GM12878 (cell line): ENCODE measurements at regions of chr15 and their contacts with region 1.

Region 1: GRCh38 chr15:100934726-100935125 is 15.6 kb downstream of the LRRK1 start:
- DNase-seq: no peak
- ATAC-seq: peak; percentile 75
- H3K4me3 ChIP-seq: no peak overlapping the region
- H3K27ac ChIP-seq: peak overlapping the region; percentile 54
- H3K4me1 ChIP-seq: peaks cover 57% of the 10 kb centered on the region
- H3K27me3 ChIP-seq: no peaks in the 10 kb centered on the region
- CTCF ChIP-seq: peak in 2 of 3 experiments; percentile 28 to 36; a peak in 4 of 6 replicates
- EP300 ChIP-seq: no peak
- POLR2A ChIP-seq: no peak
- RAD21 ChIP-seq: peak; percentile 41; the same call in 1 of the 2 replicates

Region 2: DNA sequence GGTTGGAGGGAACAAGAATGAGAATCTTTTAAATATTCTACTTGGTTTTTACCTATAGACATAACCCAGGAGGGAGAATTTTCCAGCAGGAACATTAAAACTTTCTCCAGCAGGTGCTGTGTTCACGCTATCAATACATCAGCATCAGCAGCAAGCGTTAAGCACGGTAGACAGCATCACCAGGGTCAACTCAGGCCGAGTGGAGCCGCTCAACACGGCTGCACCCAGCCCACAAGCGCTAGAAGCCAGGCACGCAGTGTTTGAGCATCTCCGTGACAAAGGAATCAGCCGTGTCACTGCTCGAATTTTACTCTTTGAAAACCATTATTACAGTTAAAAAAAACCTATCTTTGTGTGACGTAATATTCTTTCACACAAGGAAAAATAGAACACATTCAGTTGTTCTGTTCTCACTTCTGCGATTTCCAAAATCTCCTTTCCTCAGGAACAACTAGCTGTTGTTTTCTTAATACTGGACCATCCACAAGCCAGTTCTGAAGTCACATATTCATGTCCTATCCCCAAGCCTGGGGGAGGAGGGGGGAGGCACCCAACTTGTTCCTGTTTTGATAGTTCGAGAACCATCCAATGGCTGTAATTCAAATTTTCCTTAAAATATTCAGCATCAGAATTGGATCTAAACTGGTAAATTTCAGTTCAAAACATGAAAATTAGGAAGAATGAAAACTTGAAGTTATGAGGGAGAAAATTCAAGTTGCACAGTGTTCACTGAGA is 670.8 kb before region 1 on chr15:
- CTCF ChIA-PET with region 1: no interaction called
- POLR2A ChIA-PET with region 1: interaction called, 14 read pairs
- RAD21 ChIA-PET with region 1: no interaction called
- SMC1A ChIA-PET with region 1: no interaction called
- in situ Hi-C with region 1: no loop called
- intact Hi-C with region 1: no loop called
- DNase-seq: no peak
- ATAC-seq: no peak
- H3K4me3 ChIP-seq: no peak overlapping the region
- H3K27ac ChIP-seq: no peak overlapping the region
- H3K4me1 ChIP-seq: no peaks in the 10 kb centered on the region
- H3K27me3 ChIP-seq: no peaks in the 10 kb centered on the region; a peak in 1 of 4 replicates
- CTCF ChIP-seq: no peak
- EP300 ChIP-seq: no peak
- POLR2A ChIP-seq: no peak
- RAD21 ChIP-seq: no peak

Region 3: GRCh38 chr15:100553468-100553867 is 381.3 kb before region 1 on chr15:
- CTCF ChIA-PET with region 1: no interaction called
- POLR2A ChIA-PET with region 1: no interaction called
- RAD21 ChIA-PET with region 1: no interaction called
- SMC1A ChIA-PET with region 1: no interaction called
- in situ Hi-C with region 1: no loop called
- intact Hi-C with region 1: no loop called
- DNase-seq: no peak
- ATAC-seq: no peak
- H3K4me3 ChIP-seq: no peak overlapping the region
- H3K27ac ChIP-seq: no peak overlapping the region
- H3K4me1 ChIP-seq: no peaks in the 10 kb centered on the region
- H3K27me3 ChIP-seq: no peaks in the 10 kb centered on the region
- CTCF ChIP-seq: no peak
- EP300 ChIP-seq: no peak
- POLR2A ChIP-seq: no peak
- RAD21 ChIP-seq: no peak